CD8-positive, alpha-beta T cell (primary cell): ENCODE measurements at regions of chr7 and their contacts with region 1.

Region 1: DNA sequence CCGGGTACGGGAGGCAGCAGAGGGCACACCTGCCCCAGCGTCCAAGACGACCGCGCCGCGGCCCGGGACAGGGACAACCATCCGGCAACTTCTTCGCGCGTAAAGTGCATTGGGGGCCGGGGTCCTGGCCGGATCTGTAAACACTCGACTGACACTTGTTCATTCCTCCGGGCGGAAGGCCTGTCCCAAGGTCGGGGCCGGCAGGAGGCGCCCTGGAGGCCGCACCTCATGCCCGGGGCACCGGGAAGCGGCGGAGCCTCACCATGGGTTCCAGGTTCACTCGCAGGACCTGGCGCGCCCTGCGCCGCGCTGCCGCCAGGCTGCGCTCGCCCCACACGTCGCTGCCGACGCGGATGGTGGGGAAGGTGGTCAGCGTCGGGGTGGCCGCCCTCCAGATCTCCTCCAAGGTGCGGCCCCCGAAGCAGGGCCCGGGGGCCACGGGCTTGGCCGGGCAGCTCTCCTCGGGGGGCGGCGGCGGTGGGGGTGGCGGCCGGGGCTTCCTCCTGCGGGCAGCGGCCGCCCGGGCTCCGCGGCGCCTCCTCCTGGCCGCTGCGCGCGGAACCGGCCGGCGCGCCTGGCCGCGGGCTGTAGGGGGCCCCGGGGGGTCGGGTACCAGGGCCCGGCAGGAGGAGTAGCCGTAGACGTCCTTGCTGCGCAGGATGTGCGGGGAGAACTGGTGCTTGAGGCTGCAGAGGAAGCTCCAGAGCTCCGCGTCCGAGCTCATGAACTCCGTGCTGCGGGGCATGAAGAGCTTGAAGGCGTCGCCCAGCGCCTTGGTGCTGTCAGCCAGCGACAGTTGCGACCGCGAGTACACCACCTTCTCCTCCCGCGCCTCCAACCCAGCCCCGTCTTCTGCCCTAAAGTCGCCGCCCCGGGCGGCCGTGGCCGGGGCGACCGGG is 746 bp downstream of the CCDC71L start:
- DNase-seq: peak; percentile 59 to 88 (median 75)
- ATAC-seq: peak; percentile 46
- H3K4me3 ChIP-seq: peak overlapping the region; percentile 76 to 87
- H3K4me3 Mint-ChIP-seq: peak overlapping the region; percentile 96
- H3K27ac ChIP-seq: peak overlapping the region; percentile 65 to 70
- H3K27ac Mint-ChIP-seq: peak overlapping the region; percentile 89
- H3K4me1 ChIP-seq: peaks cover 15% of the 10 kb centered on the region
- H3K4me1 Mint-ChIP-seq: peaks cover 37% of the 10 kb centered on the region
- H3K27me3 ChIP-seq: no peaks in the 10 kb centered on the region
- H3K27me3 Mint-ChIP-seq: no peaks in the 10 kb centered on the region
- CTCF ChIP-seq: peak; percentile 82

Region 2: DNA sequence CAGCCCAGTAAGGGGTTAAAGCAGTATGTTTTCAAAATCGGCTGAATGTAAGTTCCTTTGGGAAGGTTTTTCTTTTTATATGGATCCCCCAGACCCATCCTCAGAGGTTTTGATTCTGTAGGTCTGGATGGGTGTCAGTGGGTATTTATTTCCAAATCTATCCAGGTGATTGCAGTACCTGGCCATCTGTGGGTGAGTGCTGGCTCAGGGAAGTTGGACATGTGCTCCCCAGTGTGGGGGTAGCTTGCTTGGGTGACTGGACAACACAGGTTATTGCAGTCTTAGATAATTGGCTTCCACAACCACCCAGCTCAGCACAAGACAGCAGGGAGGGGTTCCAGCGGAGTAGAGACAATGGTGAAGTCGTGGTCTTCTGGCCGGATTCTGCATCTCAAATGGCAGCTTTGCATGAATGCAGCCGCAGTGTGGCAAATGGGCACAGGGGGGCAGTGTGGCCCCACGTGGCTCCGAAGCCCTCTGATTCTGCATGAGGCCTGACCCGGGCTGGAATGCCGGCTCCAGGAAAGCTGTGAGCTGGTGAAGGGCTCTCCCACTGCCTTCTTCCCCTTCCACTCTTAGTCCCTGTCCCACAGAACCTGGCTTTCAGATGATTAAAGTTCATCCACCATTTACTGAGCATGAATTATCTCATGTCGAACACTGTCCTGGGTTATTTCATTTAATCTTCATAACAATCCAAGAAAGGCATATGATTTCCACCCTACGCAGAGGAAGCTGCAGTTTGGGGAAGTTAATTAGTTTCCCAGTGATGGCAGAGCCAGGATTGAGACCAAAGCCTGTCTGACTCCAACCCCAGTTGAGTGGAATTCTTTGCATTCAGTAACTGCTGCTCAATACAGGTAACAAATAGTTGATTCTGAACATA is 483.6 kb before region 1 on chr7:
- CTCF ChIA-PET with region 1: interaction called, 3 read pairs
- POLR2A ChIA-PET with region 1: no interaction called
- intact Hi-C with region 1: loop called (anchors 2 to 10 kb)
- DNase-seq: peak; percentile 46 to 81 (median 69)
- ATAC-seq: peak; percentile 79
- H3K4me3 ChIP-seq: no peak overlapping the region
- H3K4me3 Mint-ChIP-seq: no peak overlapping the region
- H3K27ac ChIP-seq: no peak overlapping the region
- H3K27ac Mint-ChIP-seq: no peak overlapping the region
- H3K4me1 ChIP-seq: no peaks in the 10 kb centered on the region
- H3K4me1 Mint-ChIP-seq: peaks cover 2% of the 10 kb centered on the region
- H3K27me3 ChIP-seq: peaks cover 2 to 4% of the 10 kb centered on the region in 2 experiments
- H3K27me3 Mint-ChIP-seq: peaks cover 10% of the 10 kb centered on the region
- CTCF ChIP-seq: peak; percentile 85

Region 3: DNA sequence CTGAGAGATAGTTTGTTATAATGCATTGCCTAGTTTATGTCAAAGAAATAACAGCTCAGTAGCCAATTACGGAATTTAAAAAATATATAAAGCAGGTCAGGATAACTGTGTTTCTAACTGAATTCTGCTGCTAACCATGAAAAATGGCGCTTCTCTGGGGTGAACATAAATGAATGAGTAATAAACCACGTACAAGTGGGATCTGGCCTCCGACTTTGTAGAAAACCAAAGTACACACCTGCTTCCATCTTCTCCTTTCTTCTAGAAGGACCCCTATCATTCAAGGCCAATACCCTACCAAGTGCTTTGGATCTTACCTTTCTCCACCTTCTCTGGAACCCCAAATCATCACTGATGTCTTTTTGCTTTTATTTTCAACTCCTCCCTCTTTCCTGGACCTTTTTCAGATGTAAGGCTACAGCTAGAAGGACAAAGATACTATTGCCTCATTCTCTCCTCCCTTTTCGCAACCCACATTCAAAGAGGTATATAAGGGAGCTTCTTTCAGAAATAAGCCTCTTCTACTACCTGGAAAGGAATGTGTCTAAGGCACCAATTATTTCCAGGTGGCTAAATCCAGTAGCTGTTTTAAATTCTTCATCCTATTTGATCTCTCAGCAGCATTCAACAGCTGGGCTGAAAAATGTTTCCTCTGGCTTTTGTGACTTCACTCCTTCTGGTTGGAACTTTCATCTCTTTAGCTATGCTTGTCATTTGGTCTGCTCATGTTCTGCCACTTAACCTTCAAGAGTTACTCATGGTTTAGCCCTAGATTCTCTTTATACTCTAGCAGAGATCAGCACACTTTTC is 413.1 kb before region 1 on chr7:
- CTCF ChIA-PET with region 1: no interaction called
- POLR2A ChIA-PET with region 1: no interaction called
- intact Hi-C with region 1: no loop called
- DNase-seq: no peak
- ATAC-seq: no peak
- H3K4me3 ChIP-seq: no peak overlapping the region
- H3K4me3 Mint-ChIP-seq: no peak overlapping the region
- H3K27ac ChIP-seq: no peak overlapping the region
- H3K27ac Mint-ChIP-seq: no peak overlapping the region
- H3K4me1 ChIP-seq: no peaks in the 10 kb centered on the region
- H3K4me1 Mint-ChIP-seq: no peaks in the 10 kb centered on the region
- H3K27me3 ChIP-seq: no peaks in the 10 kb centered on the region
- H3K27me3 Mint-ChIP-seq: no peaks in the 10 kb centered on the region
- CTCF ChIP-seq: no peak

Region 4: DNA sequence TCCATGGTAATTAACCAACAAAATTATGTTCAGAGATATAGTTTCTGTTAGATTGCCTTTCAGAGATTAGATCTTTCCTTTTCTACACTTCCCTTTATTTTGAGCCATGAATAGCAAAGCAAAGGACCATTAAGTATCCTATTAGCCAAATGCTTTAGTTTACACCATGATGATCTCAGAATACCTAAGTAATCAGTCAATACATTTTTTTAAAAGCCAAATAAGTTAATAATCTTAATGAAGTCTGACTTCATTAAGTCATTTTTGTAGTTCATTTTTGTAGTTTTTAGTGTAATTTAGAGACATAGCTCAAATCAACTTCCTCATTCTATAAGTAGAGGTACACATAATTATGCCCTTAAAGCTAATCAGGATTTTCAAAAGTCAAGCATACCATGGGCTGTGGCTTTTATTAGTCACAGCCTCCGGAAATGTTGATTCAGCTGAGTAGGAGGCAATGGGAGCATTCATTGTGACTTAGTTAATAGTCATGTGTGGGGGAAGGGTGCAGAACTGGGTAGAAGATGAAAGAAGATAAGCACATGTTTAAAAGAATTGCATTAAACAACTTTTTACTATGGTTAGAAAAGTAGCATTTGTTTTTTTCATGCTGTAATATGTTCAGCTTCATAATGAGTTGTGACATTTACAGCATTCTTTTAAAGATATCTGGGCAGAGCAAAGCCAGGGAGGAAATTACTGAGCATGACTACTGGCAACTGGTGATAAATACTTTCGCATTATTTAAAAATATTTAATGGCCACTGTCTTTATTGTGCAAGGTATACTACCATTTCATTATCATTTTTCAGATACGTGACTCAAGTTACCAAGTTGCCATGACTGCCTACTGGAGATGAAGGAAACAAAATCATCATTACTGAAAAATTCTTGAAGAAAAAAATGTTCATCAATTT is 58.0 kb after region 1 on chr7:
- CTCF ChIA-PET with region 1: no interaction called
- POLR2A ChIA-PET with region 1: no interaction called
- intact Hi-C with region 1: loop called (anchors 1 to 5 kb)
- DNase-seq: peak in 7 of 9 experiments; percentile 18 to 66 (median 51)
- ATAC-seq: peak; percentile 95
- H3K4me3 ChIP-seq: no peak overlapping the region
- H3K4me3 Mint-ChIP-seq: no peak overlapping the region
- H3K27ac ChIP-seq: no peak overlapping the region
- H3K27ac Mint-ChIP-seq: no peak overlapping the region
- H3K4me1 ChIP-seq: peaks cover 5% of the 10 kb centered on the region
- H3K4me1 Mint-ChIP-seq: no peaks in the 10 kb centered on the region
- H3K27me3 ChIP-seq: no peaks in the 10 kb centered on the region
- H3K27me3 Mint-ChIP-seq: no peaks in the 10 kb centered on the region
- CTCF ChIP-seq: no peak

Region 5: DNA sequence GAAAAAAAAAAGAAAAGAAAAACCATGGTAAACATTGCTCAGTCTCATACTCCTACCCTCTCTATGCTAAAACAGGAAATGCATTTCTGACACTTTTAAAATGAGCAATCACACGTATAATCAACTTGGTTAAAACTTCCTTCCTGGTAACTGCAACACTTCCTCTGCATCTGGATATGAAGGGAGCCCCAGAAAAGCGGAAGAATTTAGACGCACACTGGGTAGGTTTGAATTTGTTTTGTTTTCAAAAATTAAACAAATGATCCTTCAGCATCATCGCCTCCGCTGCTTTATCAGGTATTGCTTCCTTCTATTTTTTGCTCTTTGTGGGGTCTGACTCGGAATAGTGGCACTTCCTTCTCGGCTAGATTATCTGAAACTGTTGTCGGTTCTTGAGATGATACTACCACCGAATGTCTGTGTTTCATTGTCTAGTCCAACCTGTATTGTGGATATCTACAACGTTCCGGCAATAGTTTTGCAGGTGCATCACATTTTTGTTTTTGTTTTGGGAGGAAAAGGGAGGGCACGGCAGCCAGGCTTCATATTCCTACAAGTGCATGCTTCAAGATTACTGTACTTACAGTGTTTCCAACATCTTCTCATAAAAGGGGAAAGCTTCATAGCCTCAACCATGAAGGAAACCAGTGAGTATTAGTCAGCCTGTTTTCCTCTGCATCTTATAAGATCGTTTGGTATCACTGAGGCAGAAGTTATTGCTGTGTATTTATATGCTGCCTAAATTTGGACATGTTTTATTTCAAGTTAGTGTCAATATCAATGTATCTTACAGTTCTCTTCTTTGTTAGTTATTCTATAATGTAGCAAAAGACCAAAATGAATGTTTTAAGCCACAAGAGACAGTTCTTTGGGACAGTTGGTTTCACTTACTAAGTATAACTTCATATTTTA is 205.2 kb after region 1 on chr7 and contains the start of gene PIK3CG:
- CTCF ChIA-PET with region 1: no interaction called
- POLR2A ChIA-PET with region 1: no interaction called
- intact Hi-C with region 1: loop called (anchors 2 to 5 kb)
- DNase-seq: peak in 6 of 9 experiments; percentile 18 to 84 (median 40)
- ATAC-seq: peak; percentile 92
- H3K4me3 ChIP-seq: peak within 1 kb of the TSS; percentile 69 to 73
- H3K4me3 Mint-ChIP-seq: peak within 1 kb of the TSS; percentile 93
- H3K27ac ChIP-seq: peak within 1 kb of the TSS; percentile 71 to 87
- H3K27ac Mint-ChIP-seq: peak within 1 kb of the TSS; percentile 95
- H3K4me1 ChIP-seq: peaks cover 57% of the 10 kb centered on the region
- H3K4me1 Mint-ChIP-seq: peaks cover 75% of the 10 kb centered on the region
- H3K27me3 ChIP-seq: no peaks in the 10 kb centered on the region
- H3K27me3 Mint-ChIP-seq: no peaks in the 10 kb centered on the region
- CTCF ChIP-seq: no peak
- total RNA-seq, gene PIK3CG: 30.8 to 32.5 TPM

Region 6: GRCh38 chr7:107150375-107151073 is 490.3 kb after region 1 on chr7:
- CTCF ChIA-PET with region 1: interaction called, 4 read pairs
- POLR2A ChIA-PET with region 1: no interaction called
- intact Hi-C with region 1: loop called in 1 of 2 experiments (anchors 5 kb)
- DNase-seq: peak; percentile 64 to 86 (median 81)
- ATAC-seq: peak; percentile 88
- H3K4me3 ChIP-seq: no peak overlapping the region
- H3K4me3 Mint-ChIP-seq: no peak overlapping the region
- H3K27ac ChIP-seq: no peak overlapping the region
- H3K27ac Mint-ChIP-seq: no peak overlapping the region
- H3K4me1 ChIP-seq: no peaks in the 10 kb centered on the region
- H3K4me1 Mint-ChIP-seq: peaks cover 6% of the 10 kb centered on the region
- H3K27me3 ChIP-seq: no peaks in the 10 kb centered on the region
- H3K27me3 Mint-ChIP-seq: no peaks in the 10 kb centered on the region
- CTCF ChIP-seq: peak; percentile 95

Region 7: GRCh38 chr7:107551936-107552335 is 891.7 kb after region 1 on chr7:
- CTCF ChIA-PET with region 1: no interaction called
- POLR2A ChIA-PET with region 1: no interaction called
- intact Hi-C with region 1: no loop called
- DNase-seq: no peak
- ATAC-seq: no peak
- H3K4me3 ChIP-seq: no peak overlapping the region
- H3K4me3 Mint-ChIP-seq: peak overlapping the region; percentile 29
- H3K27ac ChIP-seq: no peak overlapping the region
- H3K27ac Mint-ChIP-seq: peak overlapping the region; percentile 49
- H3K4me1 ChIP-seq: peaks cover 6% of the 10 kb centered on the region
- H3K4me1 Mint-ChIP-seq: peaks cover 55% of the 10 kb centered on the region
- H3K27me3 ChIP-seq: no peaks in the 10 kb centered on the region
- H3K27me3 Mint-ChIP-seq: no peaks in the 10 kb centered on the region
- CTCF ChIP-seq: no peak

Region 8: DNA sequence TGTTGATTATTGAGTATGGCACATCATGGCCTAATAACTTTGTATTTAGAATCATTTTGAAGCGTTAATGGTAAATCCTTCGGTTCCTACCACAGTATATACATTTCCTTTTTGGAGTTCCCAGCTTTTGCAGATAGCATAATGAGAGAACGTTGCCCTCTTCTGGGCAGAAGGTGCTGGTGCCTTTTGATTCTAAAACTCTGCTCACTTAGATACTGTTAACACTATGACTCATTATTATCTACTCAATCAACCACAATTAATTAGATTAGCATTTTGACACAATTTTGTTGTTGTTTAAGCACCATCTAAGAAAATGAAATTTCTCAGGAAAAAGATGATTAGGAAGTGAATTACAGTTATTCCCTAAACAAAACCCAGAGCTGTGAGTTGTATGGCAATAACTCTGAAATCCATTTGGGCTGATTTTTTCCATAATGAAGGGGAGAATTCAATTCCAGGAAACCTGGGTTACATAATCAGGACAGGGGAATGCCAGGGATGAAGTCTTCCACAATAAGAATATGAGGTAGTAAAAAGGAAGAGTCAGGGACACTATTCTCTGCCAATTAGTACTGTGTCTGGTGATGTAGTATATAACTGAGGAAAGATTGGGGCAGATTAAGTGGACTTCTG is 1219.3 kb after region 1 on chr7:
- CTCF ChIA-PET with region 1: no interaction called
- POLR2A ChIA-PET with region 1: no interaction called
- intact Hi-C with region 1: loop called in 1 of 2 experiments (anchors 10 kb)
- DNase-seq: peak in 3 of 9 experiments; percentile 36 to 72 (median 66)
- ATAC-seq: peak; percentile 73
- H3K4me3 ChIP-seq: no peak overlapping the region
- H3K4me3 Mint-ChIP-seq: no peak overlapping the region
- H3K27ac ChIP-seq: no peak overlapping the region
- H3K27ac Mint-ChIP-seq: no peak overlapping the region
- H3K4me1 ChIP-seq: peaks cover 7% of the 10 kb centered on the region
- H3K4me1 Mint-ChIP-seq: peaks cover 18% of the 10 kb centered on the region
- H3K27me3 ChIP-seq: no peaks in the 10 kb centered on the region
- H3K27me3 Mint-ChIP-seq: peaks cover 12% of the 10 kb centered on the region
- CTCF ChIP-seq: peak; percentile 80